Ovary (tissue), 10 donors: ENCODE measurements at regions of chr9 and their contacts with region 1.

Region 1: DNA sequence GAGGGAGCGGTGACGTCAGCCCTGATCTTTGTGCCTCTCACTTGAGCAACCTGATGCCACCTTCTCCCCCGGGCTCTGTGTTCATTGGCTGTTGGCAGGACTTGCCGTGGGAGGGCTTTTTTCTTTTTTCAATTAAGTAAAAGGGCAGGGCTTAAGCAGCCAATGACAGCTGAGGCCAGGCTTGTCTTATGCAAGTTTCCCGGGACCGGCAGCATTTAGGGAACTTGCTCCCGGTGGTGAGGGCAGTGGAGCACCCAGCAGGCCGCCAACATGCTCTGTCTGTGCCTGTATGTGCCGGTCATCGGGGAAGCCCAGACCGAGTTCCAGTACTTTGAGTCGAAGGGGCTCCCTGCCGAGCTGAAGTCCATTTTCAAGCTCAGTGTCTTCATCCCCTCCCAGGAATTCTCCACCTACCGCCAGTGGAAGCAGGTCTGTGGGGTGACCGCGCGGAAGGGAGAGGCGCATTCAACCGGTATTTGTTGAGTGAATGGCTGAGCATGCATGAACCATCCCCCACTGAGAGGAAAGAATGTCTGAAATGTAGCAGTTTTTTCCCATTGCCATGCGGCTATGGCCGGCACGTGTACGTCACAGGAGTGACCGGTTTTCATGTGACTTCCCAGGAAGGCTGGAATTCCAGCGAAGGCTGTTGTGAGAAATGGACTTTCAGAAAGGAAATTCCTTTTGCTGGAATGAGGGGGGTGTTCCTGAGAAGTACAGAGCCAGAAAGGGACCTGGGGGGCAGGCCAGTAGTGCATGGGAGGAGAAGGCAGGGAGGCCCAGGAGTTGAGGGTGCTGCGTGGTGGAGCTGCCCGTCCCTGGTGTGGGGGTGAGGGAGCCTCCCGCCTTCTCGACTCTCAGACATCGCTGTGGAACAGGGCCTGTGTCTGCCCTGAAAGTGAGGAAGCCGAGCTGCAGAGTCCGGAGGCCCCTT is 29.0 kb downstream of the PTGES2 start:
- DNase-seq: peak; percentile 89 to 96 (median 94)
- H3K4me3 ChIP-seq: peak overlapping the region; percentile 49
- H3K27ac ChIP-seq: peak overlapping the region; percentile 54 to 84
- H3K4me1 ChIP-seq: peaks cover 54% of the 10 kb centered on the region
- H3K27me3 ChIP-seq: no peaks in the 10 kb centered on the region
- CTCF ChIP-seq: peak in 1 of 3 donors; percentile 22
- EP300 ChIP-seq: peak; percentile 97
- POLR2A ChIP-seq: peak; percentile 94

Region 2: GRCh38 chr9:128055344-128056040 is 43.1 kb before region 1 on chr9:
- intact Hi-C with region 1: loop called in 2 of 4 experiments (anchors 5 to 10 kb)
- DNase-seq: peak; percentile 59 to 69 (median 60)
- H3K4me3 ChIP-seq: no peak overlapping the region
- H3K27ac ChIP-seq: peak overlapping the region; percentile 42 to 89
- H3K4me1 ChIP-seq: peaks cover 21% of the 10 kb centered on the region
- H3K27me3 ChIP-seq: no peaks in the 10 kb centered on the region
- CTCF ChIP-seq: no peak
- EP300 ChIP-seq: peak; percentile 58
- POLR2A ChIP-seq: no peak

Region 3: GRCh38 chr9:128218518-128219389 is 120.2 kb after region 1 on chr9:
- intact Hi-C with region 1: no loop called
- DNase-seq: peak; percentile 89 to 95 (median 93)
- H3K4me3 ChIP-seq: peak overlapping the region; percentile 35
- H3K27ac ChIP-seq: no peak overlapping the region
- H3K4me1 ChIP-seq: peaks cover 3% of the 10 kb centered on the region
- H3K27me3 ChIP-seq: no peaks in the 10 kb centered on the region
- CTCF ChIP-seq: no peak
- EP300 ChIP-seq: no peak
- POLR2A ChIP-seq: no peak